ENCODE measurements at regions of chr5 and their contacts with region 1.

Region 1: GRCh38 chr5:38994324-38994927 is 79.8 kb downstream of the RICTOR start:
- DNase-seq: peak; percentile 50
- H3K4me3 ChIP-seq: no peak overlapping the region
- H3K4me3 Mint-ChIP-seq: no peak overlapping the region
- H3K27ac Mint-ChIP-seq: no peak overlapping the region
- H3K4me1 ChIP-seq: no peaks in the 10 kb centered on the region
- H3K4me1 Mint-ChIP-seq: no peaks in the 10 kb centered on the region
- H3K27me3 ChIP-seq: no peaks in the 10 kb centered on the region
- H3K27me3 Mint-ChIP-seq: no peaks in the 10 kb centered on the region
- CTCF ChIP-seq: peak; percentile 23 to 68

Region 2: GRCh38 chr5:38780950-38781349 is 213.5 kb before region 1 on chr5:
- CTCF ChIA-PET with region 1: no interaction called
- POLR2A ChIA-PET with region 1: no interaction called
- intact Hi-C with region 1: no loop called
- DNase-seq: no peak
- H3K4me3 ChIP-seq: no peak overlapping the region
- H3K4me3 Mint-ChIP-seq: no peak overlapping the region
- H3K27ac Mint-ChIP-seq: no peak overlapping the region
- H3K4me1 ChIP-seq: peaks cover 9% of the 10 kb centered on the region; the same call in 1 of the 2 replicates
- H3K4me1 Mint-ChIP-seq: no peaks in the 10 kb centered on the region
- H3K27me3 ChIP-seq: no peaks in the 10 kb centered on the region
- H3K27me3 Mint-ChIP-seq: peaks cover 5% of the 10 kb centered on the region
- CTCF ChIP-seq: no peak

Region 3: DNA sequence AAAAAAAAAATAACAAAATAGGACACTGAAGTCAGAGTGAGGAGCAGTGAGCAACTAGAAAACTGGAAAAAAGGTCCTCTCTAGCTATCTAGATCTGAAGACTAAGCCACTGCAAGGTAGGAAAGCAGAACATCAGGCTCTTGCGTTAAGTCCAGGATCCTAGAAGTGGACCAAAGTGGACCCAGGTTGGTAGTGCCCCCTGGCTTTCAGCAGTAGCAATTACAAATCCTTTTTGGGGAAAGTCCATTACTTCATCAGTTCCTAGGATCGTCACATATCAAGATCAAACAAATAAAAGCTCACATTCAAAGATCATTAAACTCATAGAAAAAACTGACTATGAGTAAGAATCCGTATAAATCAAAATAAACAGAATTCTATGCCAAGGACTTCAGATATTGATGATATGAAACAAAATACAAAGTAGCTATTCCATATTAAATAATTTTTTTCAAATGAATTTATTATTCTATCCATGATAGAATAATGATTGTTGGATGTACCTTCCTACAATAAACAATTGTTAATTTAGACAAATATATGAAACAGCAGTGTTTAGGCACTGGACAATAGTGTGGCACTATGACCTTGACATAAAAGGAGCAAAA is 86.3 kb after region 1 on chr5:
- CTCF ChIA-PET with region 1: no interaction called
- POLR2A ChIA-PET with region 1: no interaction called
- intact Hi-C with region 1: loop called (anchors 1 kb)
- DNase-seq: peak; percentile 58 to 71
- H3K4me3 ChIP-seq: no peak overlapping the region
- H3K4me3 Mint-ChIP-seq: no peak overlapping the region
- H3K27ac Mint-ChIP-seq: no peak overlapping the region
- H3K4me1 ChIP-seq: no peaks in the 10 kb centered on the region
- H3K4me1 Mint-ChIP-seq: no peaks in the 10 kb centered on the region
- H3K27me3 ChIP-seq: no peaks in the 10 kb centered on the region
- H3K27me3 Mint-ChIP-seq: peaks cover 3% of the 10 kb centered on the region
- CTCF ChIP-seq: peak; percentile 82 to 86

Region 4: GRCh38 chr5:39106322-39106721 is 111.9 kb after region 1 on chr5:
- CTCF ChIA-PET with region 1: no interaction called
- POLR2A ChIA-PET with region 1: no interaction called
- intact Hi-C with region 1: loop called (anchors 1 kb)
- DNase-seq: no peak
- H3K4me3 ChIP-seq: no peak overlapping the region
- H3K4me3 Mint-ChIP-seq: no peak overlapping the region
- H3K27ac Mint-ChIP-seq: no peak overlapping the region
- H3K4me1 ChIP-seq: peaks cover 11% of the 10 kb centered on the region; the same call in 1 of the 2 replicates
- H3K4me1 Mint-ChIP-seq: no peaks in the 10 kb centered on the region
- H3K27me3 ChIP-seq: no peaks in the 10 kb centered on the region
- H3K27me3 Mint-ChIP-seq: peaks cover 9% of the 10 kb centered on the region
- CTCF ChIP-seq: peak; percentile 24 to 36

Region 5: GRCh38 chr5:39194466-39195136 is 200.2 kb after region 1 on chr5:
- CTCF ChIA-PET with region 1: no interaction called
- POLR2A ChIA-PET with region 1: no interaction called
- intact Hi-C with region 1: loop called (anchors 10 kb)
- DNase-seq: peak; percentile 59 to 71
- H3K4me3 ChIP-seq: no peak overlapping the region
- H3K4me3 Mint-ChIP-seq: no peak overlapping the region
- H3K27ac Mint-ChIP-seq: peak overlapping the region; percentile 1
- H3K4me1 ChIP-seq: peaks cover 85% of the 10 kb centered on the region
- H3K4me1 Mint-ChIP-seq: peaks cover 32% of the 10 kb centered on the region
- H3K27me3 ChIP-seq: no peaks in the 10 kb centered on the region
- H3K27me3 Mint-ChIP-seq: no peaks in the 10 kb centered on the region
- CTCF ChIP-seq: no peak

Measured in Caco-2 (cell line).